ENCODE measurements at regions of chr3 and their contacts with region 1.

Region 1: DNA sequence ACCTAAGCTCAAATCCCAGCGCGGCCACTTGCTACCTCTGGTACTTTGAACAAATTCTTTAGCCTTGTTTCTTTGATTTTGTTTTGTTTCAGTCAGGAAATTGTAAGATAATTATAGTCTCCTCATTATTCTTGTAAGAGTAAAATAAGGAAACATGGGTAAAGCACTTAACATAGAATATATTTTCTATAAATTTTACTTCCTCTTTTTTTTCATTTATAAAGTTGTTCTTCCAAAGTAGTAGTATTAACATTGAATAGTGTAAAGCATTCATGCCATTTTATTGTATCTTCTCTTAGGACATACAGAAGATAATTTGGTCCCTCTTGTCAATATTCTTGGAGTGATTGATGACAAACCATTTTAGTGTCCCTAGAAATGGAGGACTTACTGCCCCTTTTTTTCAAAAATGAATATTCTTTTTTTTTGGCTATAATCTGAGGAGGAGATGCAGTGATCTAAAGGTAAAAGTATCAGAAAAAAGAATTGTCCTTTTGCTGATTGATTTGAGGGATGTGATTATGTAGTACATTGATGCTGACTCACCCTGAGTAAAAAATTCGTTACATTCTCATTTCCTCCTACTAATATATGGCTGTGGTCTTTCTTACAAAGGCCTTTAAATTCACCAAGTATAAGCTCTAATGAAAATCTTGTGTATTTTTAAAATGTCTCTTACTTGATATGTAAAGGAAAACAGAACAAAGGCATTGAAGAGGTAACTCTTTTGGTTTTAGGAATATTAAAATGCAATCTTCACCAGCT is 51.0 kb downstream of the ALCAM start:
- DNase-seq: no peak
- ATAC-seq: peak; percentile 86
- H3K4me3 ChIP-seq: no peak overlapping the region
- H3K27ac ChIP-seq: no peak overlapping the region
- H3K4me1 ChIP-seq: no peaks in the 10 kb centered on the region
- H3K27me3 ChIP-seq: no peaks in the 10 kb centered on the region
- CTCF ChIP-seq: no peak
- EP300 ChIP-seq: no peak
- POLR2A ChIP-seq: no peak
- RAD21 ChIP-seq: no peak

Region 2: DNA sequence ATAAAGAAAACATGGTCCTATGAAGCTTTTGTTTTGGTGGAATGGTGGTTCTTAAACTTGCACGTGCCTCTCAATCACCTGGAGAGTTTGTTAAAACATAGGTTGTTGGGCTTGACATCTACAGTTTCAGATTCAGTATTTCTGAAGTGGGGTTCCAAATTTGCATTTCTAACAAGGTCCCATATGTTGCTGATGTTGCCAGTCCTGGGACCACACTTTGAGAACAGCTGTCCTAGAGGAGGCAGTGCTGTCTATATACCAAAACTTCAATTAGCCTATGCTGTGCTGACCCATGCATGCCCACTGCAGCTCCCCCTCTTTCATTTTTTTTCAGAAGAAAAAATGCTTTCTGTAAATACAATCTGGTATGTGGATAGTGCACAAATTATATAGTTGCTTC is 19.7 kb before region 1 on chr3:
- CTCF ChIA-PET with region 1: interaction called, 4 read pairs
- POLR2A ChIA-PET with region 1: no interaction called
- RAD21 ChIA-PET with region 1: interaction called, 4 read pairs
- SMC1A ChIA-PET with region 1: interaction called, 15 read pairs
- in situ Hi-C with region 1: no loop called
- intact Hi-C with region 1: no loop called
- DNase-seq: no peak
- ATAC-seq: peak; percentile 68
- H3K4me3 ChIP-seq: no peak overlapping the region
- H3K27ac ChIP-seq: no peak overlapping the region
- H3K4me1 ChIP-seq: no peaks in the 10 kb centered on the region
- H3K27me3 ChIP-seq: no peaks in the 10 kb centered on the region
- CTCF ChIP-seq: no peak
- EP300 ChIP-seq: no peak
- POLR2A ChIP-seq: no peak
- RAD21 ChIP-seq: no peak